A549 (cell line): ENCODE measurements at regions of chr2 and their contacts with region 1.

Region 1: GRCh38 chr2:232292395-232293154 is 86.0 kb upstream of the ALPP start:
- DNase-seq: peak; percentile 47 to 64
- ATAC-seq: peak; percentile 82 to 95
- H3K4me3 ChIP-seq: no peak overlapping the region
- H3K27ac ChIP-seq: no peak overlapping the region
- H3K4me1 ChIP-seq: no peaks in the 10 kb centered on the region
- CTCF ChIP-seq: peak; percentile 62
- EP300 ChIP-seq: no peak
- POLR2A ChIP-seq: no peak
- RAD21 ChIP-seq: peak; percentile 36 to 49; a peak in 4 of 5 replicates

Region 2: GRCh38 chr2:232280341-232280740 is 12.2 kb before region 1 on chr2:
- CTCF ChIA-PET with region 1: interaction called, 25 read pairs
- POLR2A ChIA-PET with region 1: no interaction called
- DNase-seq: no peak
- ATAC-seq: no peak
- H3K4me3 ChIP-seq: no peak overlapping the region
- H3K27ac ChIP-seq: no peak overlapping the region
- H3K4me1 ChIP-seq: no peaks in the 10 kb centered on the region
- CTCF ChIP-seq: no peak
- EP300 ChIP-seq: no peak
- POLR2A ChIP-seq: no peak
- RAD21 ChIP-seq: no peak

Region 3: DNA sequence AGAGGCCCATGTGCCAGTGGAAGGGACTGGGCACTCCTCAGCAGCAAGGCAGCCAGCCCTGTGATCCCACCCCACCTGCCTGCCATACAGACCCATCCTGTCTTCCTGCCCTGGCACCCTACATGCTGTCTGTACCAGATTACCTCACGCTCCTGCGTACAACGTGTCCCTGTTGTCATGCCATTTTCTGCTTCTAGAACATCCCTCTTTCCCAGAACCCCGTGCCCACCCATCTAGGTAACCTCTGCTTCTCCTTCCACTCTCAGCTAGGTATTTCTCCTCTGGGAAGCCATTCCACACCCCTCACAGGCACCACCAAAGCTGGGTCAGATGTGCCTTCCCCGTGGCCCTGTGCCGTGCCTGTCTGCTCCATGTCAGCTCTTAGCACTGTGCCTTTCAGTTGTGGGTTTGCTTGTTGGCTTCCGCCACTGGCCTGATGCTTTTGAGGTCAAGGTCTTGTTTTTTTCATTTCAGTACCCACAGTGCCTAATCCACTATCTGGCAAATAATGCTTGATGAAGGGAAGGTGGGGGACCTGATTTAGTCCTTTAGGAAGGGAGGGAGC is 14.2 kb after region 1 on chr2:
- CTCF ChIA-PET with region 1: interaction called, 10 read pairs
- POLR2A ChIA-PET with region 1: interaction called, 6 read pairs
- DNase-seq: no peak
- ATAC-seq: no peak
- H3K4me3 ChIP-seq: no peak overlapping the region
- H3K27ac ChIP-seq: no peak overlapping the region
- H3K4me1 ChIP-seq: peaks cover 2% of the 10 kb centered on the region
- CTCF ChIP-seq: no peak
- EP300 ChIP-seq: no peak
- POLR2A ChIP-seq: no peak
- RAD21 ChIP-seq: no peak